Caco-2 (cell line): ENCODE measurements at regions of chr2 and their contacts with region 1.

Region 1: DNA sequence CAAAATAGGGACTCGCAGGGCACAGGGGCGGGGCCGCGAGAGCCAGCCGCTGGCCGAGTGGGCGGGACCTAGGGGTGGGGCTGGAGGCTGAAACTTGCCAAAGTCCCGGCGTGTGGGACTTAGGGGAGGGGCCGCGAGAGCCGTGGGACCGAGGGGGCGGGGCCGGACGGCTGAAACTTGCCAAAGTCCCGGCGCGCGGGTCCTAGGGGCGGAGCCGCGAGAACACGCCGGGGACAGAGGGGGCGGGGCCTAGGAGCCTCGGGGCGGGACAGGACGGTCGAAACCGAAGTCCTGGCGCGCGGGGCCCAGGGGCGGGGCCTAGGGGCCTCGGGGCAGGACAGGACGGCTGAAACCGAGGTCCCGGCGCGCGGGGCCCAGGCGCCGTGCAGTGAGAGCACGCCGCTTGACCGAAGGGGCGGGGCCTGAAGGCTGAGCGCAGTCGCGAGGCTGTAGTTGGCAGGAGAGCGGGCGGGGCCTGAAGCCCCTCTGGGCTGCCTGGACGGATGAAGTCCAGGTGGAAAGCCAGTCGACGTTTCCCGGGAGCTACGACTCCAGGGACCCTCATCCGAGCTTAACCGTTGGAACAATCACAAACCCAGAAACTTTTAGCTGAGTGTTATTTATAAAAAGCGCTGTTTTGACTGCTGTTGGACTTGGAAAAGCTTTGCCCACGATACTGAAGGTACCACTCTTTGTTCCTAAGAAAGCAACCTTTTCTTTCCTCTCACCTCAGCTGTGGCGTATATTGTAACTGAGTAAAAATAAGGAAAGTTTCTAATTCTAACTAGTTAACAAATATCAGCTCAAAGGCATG is 475 bp upstream of the BARD1 start:
- DNase-seq: peak; percentile 99 to 100
- H3K4me3 ChIP-seq: peak overlapping the region; percentile 68
- H3K4me3 Mint-ChIP-seq: peak overlapping the region; percentile 77
- H3K27ac Mint-ChIP-seq: peak overlapping the region; percentile 45
- H3K4me1 ChIP-seq: peaks cover 12% of the 10 kb centered on the region; the same call in 1 of the 2 replicates
- H3K4me1 Mint-ChIP-seq: peaks cover 10% of the 10 kb centered on the region
- H3K27me3 ChIP-seq: no peaks in the 10 kb centered on the region
- H3K27me3 Mint-ChIP-seq: no peaks in the 10 kb centered on the region
- CTCF ChIP-seq: no peak

Region 2: DNA sequence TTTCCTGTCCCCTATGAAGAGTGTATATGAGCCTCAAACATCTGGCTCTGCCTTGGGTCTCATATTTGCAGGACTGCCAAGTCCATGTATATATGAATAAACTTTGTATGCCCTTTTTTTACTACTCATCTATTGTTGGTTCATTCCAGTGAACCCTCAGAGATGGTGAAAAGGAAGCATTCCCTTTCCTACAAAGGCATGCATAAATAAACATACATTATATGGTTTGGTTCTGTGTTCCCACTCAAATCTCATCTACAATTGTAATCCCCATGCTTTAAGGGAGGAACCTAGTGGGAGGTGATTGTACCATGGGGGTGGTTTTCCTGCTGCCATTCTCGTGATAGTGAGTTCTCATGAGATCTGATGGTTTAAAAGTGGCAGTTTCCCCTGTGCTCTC is 991.5 kb before region 1 on chr2:
- CTCF ChIA-PET with region 1: no interaction called
- POLR2A ChIA-PET with region 1: interaction called, 15 read pairs
- intact Hi-C with region 1: no loop called
- DNase-seq: no peak
- H3K4me3 ChIP-seq: no peak overlapping the region
- H3K4me3 Mint-ChIP-seq: no peak overlapping the region
- H3K27ac Mint-ChIP-seq: peak overlapping the region; percentile 77
- H3K4me1 ChIP-seq: peaks cover 8% of the 10 kb centered on the region
- H3K4me1 Mint-ChIP-seq: peaks cover 6% of the 10 kb centered on the region
- H3K27me3 ChIP-seq: no peaks in the 10 kb centered on the region
- H3K27me3 Mint-ChIP-seq: no peaks in the 10 kb centered on the region
- CTCF ChIP-seq: no peak

Region 3: GRCh38 chr2:214593727-214594126 is 216.2 kb before region 1 on chr2:
- CTCF ChIA-PET with region 1: no interaction called
- POLR2A ChIA-PET with region 1: no interaction called
- intact Hi-C with region 1: loop called (anchors 10 kb)
- DNase-seq: peak; percentile 27 to 53
- H3K4me3 ChIP-seq: no peak overlapping the region
- H3K4me3 Mint-ChIP-seq: no peak overlapping the region
- H3K27ac Mint-ChIP-seq: no peak overlapping the region
- H3K4me1 ChIP-seq: no peaks in the 10 kb centered on the region
- H3K4me1 Mint-ChIP-seq: no peaks in the 10 kb centered on the region
- H3K27me3 ChIP-seq: no peaks in the 10 kb centered on the region
- H3K27me3 Mint-ChIP-seq: no peaks in the 10 kb centered on the region
- CTCF ChIP-seq: no peak

Region 4: DNA sequence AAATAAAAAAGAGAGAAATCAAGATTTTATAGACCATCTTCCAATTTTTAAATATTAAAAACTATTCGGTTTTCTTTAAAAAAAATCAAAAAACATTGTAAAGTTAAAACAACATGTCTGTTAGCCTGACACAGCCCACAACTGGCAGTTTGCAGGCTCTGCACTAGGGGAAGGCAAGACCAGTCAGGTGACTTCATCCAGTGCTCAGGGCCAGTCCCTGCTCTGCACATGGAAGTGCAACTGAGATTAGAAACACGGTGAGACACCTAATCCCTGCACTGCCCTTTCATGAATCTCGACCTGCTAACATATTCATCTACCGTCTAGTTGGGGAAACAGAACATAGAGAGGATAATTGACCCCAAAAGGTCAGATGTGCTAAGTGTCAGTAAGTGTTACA is 135.7 kb before region 1 on chr2:
- CTCF ChIA-PET with region 1: no interaction called
- POLR2A ChIA-PET with region 1: no interaction called
- intact Hi-C with region 1: loop called (anchors 5 kb)
- DNase-seq: no peak
- H3K4me3 ChIP-seq: no peak overlapping the region
- H3K4me3 Mint-ChIP-seq: no peak overlapping the region
- H3K27ac Mint-ChIP-seq: no peak overlapping the region
- H3K4me1 ChIP-seq: peaks cover 26% of the 10 kb centered on the region
- H3K4me1 Mint-ChIP-seq: peaks cover 24% of the 10 kb centered on the region
- H3K27me3 ChIP-seq: no peaks in the 10 kb centered on the region
- H3K27me3 Mint-ChIP-seq: no peaks in the 10 kb centered on the region
- CTCF ChIP-seq: no peak

Region 5: GRCh38 chr2:215311625-215312396 is 501.9 kb after region 1 on chr2 and contains the start of gene ATIC:
- CTCF ChIA-PET with region 1: no interaction called
- POLR2A ChIA-PET with region 1: interaction called, 3 read pairs
- intact Hi-C with region 1: loop called (anchors 2 kb)
- DNase-seq: peak; percentile 97
- H3K4me3 ChIP-seq: peak within 1 kb of the TSS; percentile 57
- H3K4me3 Mint-ChIP-seq: peak within 1 kb of the TSS; percentile 87
- H3K27ac Mint-ChIP-seq: peak within 1 kb of the TSS; percentile 83
- H3K4me1 ChIP-seq: peaks cover 25% of the 10 kb centered on the region
- H3K4me1 Mint-ChIP-seq: peaks cover 23% of the 10 kb centered on the region
- H3K27me3 ChIP-seq: no peaks in the 10 kb centered on the region
- H3K27me3 Mint-ChIP-seq: no peaks in the 10 kb centered on the region
- CTCF ChIP-seq: no peak
- total RNA-seq, gene ATIC: 318 and 325 TPM in 2 replicates